ENCODE measurements at regions of chr6 and their contacts with region 1.

Region 1: GRCh38 chr6:10478187-10479040 is 42.7 kb upstream of the GCNT2 start:
- DNase-seq: peak in 3 of 14 experiments; percentile 38 to 55 (median 40)
- ATAC-seq: no peak
- H3K4me3 ChIP-seq: no peak overlapping the region
- H3K4me3 Mint-ChIP-seq: no peak overlapping the region
- H3K27ac ChIP-seq: no peak overlapping the region
- H3K27ac Mint-ChIP-seq: no peak overlapping the region
- H3K4me1 ChIP-seq: no peaks in the 10 kb centered on the region
- H3K4me1 Mint-ChIP-seq: no peaks in the 10 kb centered on the region
- H3K27me3 ChIP-seq: peaks cover 8 to 9% of the 10 kb centered on the region in 2 experiments
- H3K27me3 Mint-ChIP-seq: peaks cover 33% of the 10 kb centered on the region
- CTCF ChIP-seq: peak; percentile 69

Region 2: DNA sequence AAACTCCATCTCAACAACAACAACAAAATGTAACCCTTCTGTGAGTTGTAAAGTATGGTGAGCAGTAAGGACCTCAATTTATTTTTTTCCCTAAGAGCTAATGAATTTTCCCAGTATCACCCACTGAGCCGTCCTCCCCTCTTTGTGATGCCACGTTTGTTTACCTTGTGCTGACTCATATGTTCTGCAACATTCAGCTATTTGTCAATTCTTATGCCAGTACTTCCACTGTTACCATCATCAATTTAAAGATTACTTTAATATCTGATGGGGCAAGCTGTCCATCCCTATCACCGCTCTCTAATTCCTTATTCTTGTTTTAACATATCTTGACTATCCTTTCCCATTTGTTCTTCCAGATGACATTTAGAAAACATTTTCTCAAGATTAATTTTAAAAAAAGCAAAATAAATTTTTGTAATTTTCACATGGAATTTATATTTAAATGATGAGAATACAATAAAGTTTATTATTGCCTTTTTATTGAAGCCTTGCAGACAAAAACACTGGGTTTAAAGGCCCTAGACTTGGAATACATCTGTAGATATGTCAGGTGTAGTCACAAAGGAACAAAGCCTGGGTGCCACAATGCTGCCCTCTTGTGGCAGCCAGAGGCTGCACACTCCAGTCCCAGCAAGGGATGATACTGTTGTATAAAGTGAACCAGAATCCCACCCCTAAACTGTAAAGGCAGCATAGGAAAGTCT is 322.6 kb after region 1 on chr6:
- CTCF ChIA-PET with region 1: interaction called, 5 read pairs
- POLR2A ChIA-PET with region 1: no interaction called
- intact Hi-C with region 1: loop called (anchors 1 kb)
- DNase-seq: peak; percentile 34 to 76 (median 54)
- ATAC-seq: peak; percentile 81
- H3K4me3 ChIP-seq: no peak overlapping the region
- H3K4me3 Mint-ChIP-seq: no peak overlapping the region
- H3K27ac ChIP-seq: no peak overlapping the region
- H3K27ac Mint-ChIP-seq: no peak overlapping the region
- H3K4me1 ChIP-seq: no peaks in the 10 kb centered on the region
- H3K4me1 Mint-ChIP-seq: no peaks in the 10 kb centered on the region
- H3K27me3 ChIP-seq: no peaks in the 10 kb centered on the region
- H3K27me3 Mint-ChIP-seq: no peaks in the 10 kb centered on the region
- CTCF ChIP-seq: peak; percentile 99

Region 3: DNA sequence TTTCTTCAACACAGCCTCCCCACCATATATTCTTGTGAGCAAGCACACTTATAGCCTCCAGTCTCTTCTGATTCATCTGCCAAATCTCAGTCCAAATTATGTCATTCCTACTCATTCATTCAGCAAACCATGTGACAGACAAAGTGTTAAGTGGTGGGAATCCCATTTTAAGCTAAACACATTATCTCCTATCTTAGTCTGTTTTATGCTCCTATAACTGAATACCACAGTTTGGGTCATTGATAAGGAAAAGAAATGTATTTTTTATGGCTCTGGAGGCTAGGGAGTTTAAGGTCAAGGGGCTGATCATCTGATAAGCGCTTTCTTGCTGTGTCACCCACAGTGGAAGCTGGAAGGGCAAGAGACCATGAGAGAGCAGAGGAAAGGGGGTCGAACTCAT is 591.3 kb after region 1 on chr6:
- CTCF ChIA-PET with region 1: interaction called, 3 read pairs
- POLR2A ChIA-PET with region 1: no interaction called
- intact Hi-C with region 1: loop called (anchors 2 kb)
- DNase-seq: no peak
- ATAC-seq: no peak
- H3K4me3 ChIP-seq: no peak overlapping the region
- H3K4me3 Mint-ChIP-seq: no peak overlapping the region
- H3K27ac ChIP-seq: no peak overlapping the region
- H3K27ac Mint-ChIP-seq: no peak overlapping the region
- H3K4me1 ChIP-seq: no peaks in the 10 kb centered on the region
- H3K4me1 Mint-ChIP-seq: no peaks in the 10 kb centered on the region
- H3K27me3 ChIP-seq: no peaks in the 10 kb centered on the region
- H3K27me3 Mint-ChIP-seq: peaks cover 9% of the 10 kb centered on the region
- CTCF ChIP-seq: no peak

Measured in CD4-positive, alpha-beta T cell (primary cell).